Calu3 (cell line): ENCODE measurements at regions of chr7 and their contacts with region 1.

Region 1: DNA sequence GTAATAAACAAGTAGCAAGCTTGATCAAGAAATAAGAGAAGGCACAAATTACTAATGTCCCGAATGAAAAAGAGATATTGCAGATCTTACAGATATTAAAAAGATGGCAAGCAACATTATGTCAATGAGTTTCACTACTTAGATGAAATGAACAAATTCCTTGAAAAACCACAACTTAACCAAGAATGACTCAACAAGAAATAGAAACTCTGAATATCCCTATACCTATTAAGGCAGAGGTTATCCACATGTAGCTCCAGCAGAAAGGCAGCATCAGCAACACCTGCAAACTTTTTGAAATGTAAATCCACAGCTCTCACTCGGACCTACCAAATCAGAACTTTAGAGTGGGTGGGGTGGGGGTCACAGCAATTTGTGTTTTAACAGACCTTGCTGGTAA is 33.6 kb downstream of the PDE1C start:
- DNase-seq: no peak
- H3K4me3 Mint-ChIP-seq: no peak overlapping the region
- H3K27ac Mint-ChIP-seq: peak overlapping the region; percentile 2
- H3K4me1 Mint-ChIP-seq: peaks cover 92% of the 10 kb centered on the region
- H3K27me3 Mint-ChIP-seq: no peaks in the 10 kb centered on the region
- CTCF ChIP-seq: no peak

Region 2: GRCh38 chr7:31811650-31812461 is 224.7 kb before region 1 on chr7:
- CTCF ChIA-PET with region 1: no interaction called
- intact Hi-C with region 1: loop called (anchors 2 kb)
- DNase-seq: no peak
- H3K4me3 Mint-ChIP-seq: no peak overlapping the region
- H3K27ac Mint-ChIP-seq: no peak overlapping the region
- H3K4me1 Mint-ChIP-seq: peaks cover 25% of the 10 kb centered on the region
- H3K27me3 Mint-ChIP-seq: no peaks in the 10 kb centered on the region
- CTCF ChIP-seq: no peak

Region 3: DNA sequence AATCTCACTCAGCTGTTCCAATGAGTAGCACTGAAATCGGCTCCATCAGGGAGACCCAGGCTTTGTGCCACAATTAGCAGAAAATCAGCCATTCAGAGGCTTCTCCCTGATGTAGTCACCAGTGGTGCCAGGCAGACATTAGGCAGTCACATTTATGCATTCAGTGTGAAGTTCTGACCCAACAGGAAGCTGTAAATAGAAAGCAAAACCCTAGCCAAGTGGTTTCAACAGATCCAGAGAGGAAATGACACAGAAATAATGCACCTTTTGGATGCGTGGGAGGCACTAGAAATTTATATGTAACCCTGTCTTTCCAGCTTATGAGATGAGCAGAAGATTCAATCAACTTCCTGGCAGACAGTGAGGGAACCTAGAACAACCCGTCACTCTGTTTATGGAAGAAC is 152.8 kb before region 1 on chr7:
- CTCF ChIA-PET with region 1: no interaction called
- intact Hi-C with region 1: no loop called
- DNase-seq: no peak
- H3K4me3 Mint-ChIP-seq: no peak overlapping the region
- H3K27ac Mint-ChIP-seq: peak overlapping the region; percentile 13
- H3K4me1 Mint-ChIP-seq: peaks cover 29% of the 10 kb centered on the region
- H3K27me3 Mint-ChIP-seq: no peaks in the 10 kb centered on the region
- CTCF ChIP-seq: no peak

Region 4: DNA sequence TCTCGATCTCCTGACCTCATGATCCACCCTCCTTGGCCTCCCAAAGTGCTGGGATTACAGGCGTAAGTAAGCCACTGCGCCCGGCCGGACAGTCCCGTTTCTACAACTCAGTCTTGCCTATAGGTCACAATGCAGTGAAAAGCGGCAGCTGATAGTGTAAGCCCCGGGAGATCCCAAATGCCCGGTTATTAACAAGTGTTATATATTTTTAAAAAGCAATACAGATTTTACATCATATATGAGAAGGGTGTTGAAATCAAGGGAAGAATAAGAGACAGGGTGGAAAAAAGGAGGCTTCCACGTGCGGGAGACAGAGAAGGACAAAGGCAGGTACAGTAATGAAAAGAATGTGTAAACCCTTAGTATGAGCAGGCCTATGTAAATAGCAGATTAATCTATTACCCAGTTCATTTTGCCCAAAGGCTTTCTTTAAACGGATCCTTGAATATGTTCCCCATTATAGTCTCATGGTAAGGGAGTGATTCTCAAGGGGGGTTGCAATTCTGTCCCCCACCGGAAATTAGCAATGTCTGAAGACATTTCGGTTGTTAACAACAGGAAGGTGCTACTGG is 137.1 kb before region 1 on chr7:
- CTCF ChIA-PET with region 1: no interaction called
- intact Hi-C with region 1: loop called (anchors 2 kb)
- DNase-seq: peak; percentile 45
- H3K4me3 Mint-ChIP-seq: peak overlapping the region; percentile 69
- H3K27ac Mint-ChIP-seq: peak overlapping the region; percentile 88
- H3K4me1 Mint-ChIP-seq: peaks cover 28% of the 10 kb centered on the region
- H3K27me3 Mint-ChIP-seq: no peaks in the 10 kb centered on the region
- CTCF ChIP-seq: no peak